Activated T-helper 2 cell treated with anti-CD3 and anti-CD28 coated beads, Interferon-gamma antibody, Interleukin-2, Interleukin-4, amounts not matched to agents 10 μg/mL and 5 μg/mL and 100 μg/mL, durations not matched to agents 14 hours and 24 hours and 36 hours (primary cell): ENCODE measurements at regions of chr5 and their contacts with region 1.

Region 1: GRCh38 chr5:32312647-32313523 is at the start of gene MTMR12:
- DNase-seq: peak; percentile 100
- H3K4me3 Mint-ChIP-seq: peak within 1 kb of the TSS; percentile 87
- H3K27ac Mint-ChIP-seq: peak within 1 kb of the TSS; percentile 76
- H3K4me1 Mint-ChIP-seq: peaks cover 22% of the 10 kb centered on the region
- H3K27me3 Mint-ChIP-seq: no peaks in the 10 kb centered on the region
- total RNA-seq, gene MTMR12: 22.7 and 23.5 TPM in 2 replicates

Region 2: GRCh38 chr5:32206509-32207354 is 106.2 kb before region 1 on chr5:
- intact Hi-C with region 1: loop called (anchors 5 kb)
- DNase-seq: no peak
- H3K4me3 Mint-ChIP-seq: no peak overlapping the region
- H3K27ac Mint-ChIP-seq: peak overlapping the region; percentile 38
- H3K4me1 Mint-ChIP-seq: peaks cover 23% of the 10 kb centered on the region
- H3K27me3 Mint-ChIP-seq: no peaks in the 10 kb centered on the region

Region 3: GRCh38 chr5:32232441-32233219 is 80.3 kb before region 1 on chr5:
- intact Hi-C with region 1: loop called (anchors 1 kb)
- DNase-seq: peak; percentile 63
- H3K4me3 Mint-ChIP-seq: no peak overlapping the region
- H3K27ac Mint-ChIP-seq: peak overlapping the region; percentile 82
- H3K4me1 Mint-ChIP-seq: peaks cover 25% of the 10 kb centered on the region
- H3K27me3 Mint-ChIP-seq: no peaks in the 10 kb centered on the region

Region 4: DNA sequence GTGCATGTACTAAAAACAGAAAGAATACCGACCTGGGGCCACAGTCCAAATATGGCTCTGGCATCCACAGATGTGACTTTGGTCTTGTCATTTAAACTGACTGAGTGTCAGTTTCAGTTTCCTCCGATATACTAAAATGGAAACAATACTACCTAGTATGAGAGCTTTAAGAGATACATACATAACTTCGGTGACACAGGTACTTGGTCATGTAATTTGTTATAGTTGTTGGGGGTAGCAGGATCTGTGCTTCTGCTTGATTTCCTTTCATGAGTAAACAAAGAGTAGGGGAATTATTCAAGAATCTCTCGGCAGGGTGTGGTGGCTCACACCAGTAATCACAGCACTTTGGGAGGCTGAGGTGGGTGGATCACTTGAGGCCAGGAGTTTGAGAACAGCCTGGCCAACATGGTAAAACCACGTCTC is 32.2 kb before region 1 on chr5:
- intact Hi-C with region 1: loop called (anchors 1 kb)
- DNase-seq: no peak
- H3K4me3 Mint-ChIP-seq: peak overlapping the region; percentile 7
- H3K27ac Mint-ChIP-seq: peak overlapping the region; percentile 93
- H3K4me1 Mint-ChIP-seq: peaks cover 54% of the 10 kb centered on the region
- H3K27me3 Mint-ChIP-seq: no peaks in the 10 kb centered on the region

Region 5: DNA sequence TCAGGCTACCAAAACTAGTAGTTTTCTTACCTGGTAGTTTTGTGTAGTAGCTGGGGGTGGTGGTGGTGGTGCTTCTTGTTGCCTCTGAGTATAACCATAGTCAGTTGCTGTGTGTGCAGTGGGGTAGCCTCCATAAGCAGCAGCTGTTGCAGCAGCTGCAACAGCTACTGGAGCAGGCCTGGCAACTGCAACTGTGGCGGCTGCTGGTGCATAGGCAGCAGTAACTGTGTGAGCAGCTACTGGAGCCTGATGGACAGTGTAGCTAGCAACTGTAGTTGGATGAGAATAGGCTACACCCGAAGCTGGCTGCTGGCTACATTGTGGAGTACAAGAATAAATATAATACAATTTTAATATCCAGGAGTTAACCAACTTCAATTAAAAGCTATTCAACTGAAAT is 106.9 kb after region 1 on chr5:
- intact Hi-C with region 1: no loop called
- DNase-seq: no peak
- H3K4me3 Mint-ChIP-seq: no peak overlapping the region
- H3K27ac Mint-ChIP-seq: no peak overlapping the region
- H3K4me1 Mint-ChIP-seq: peaks cover 15% of the 10 kb centered on the region
- H3K27me3 Mint-ChIP-seq: no peaks in the 10 kb centered on the region

Region 6: GRCh38 chr5:32444431-32445286 is 131.8 kb after region 1 on chr5 and contains the start of gene ZFR:
- intact Hi-C with region 1: loop called (anchors 1 kb)
- DNase-seq: peak; percentile 91
- H3K4me3 Mint-ChIP-seq: peak within 1 kb of the TSS; percentile 93
- H3K27ac Mint-ChIP-seq: peak within 1 kb of the TSS; percentile 93
- H3K4me1 Mint-ChIP-seq: peaks cover 30% of the 10 kb centered on the region
- H3K27me3 Mint-ChIP-seq: peaks cover 17% of the 10 kb centered on the region
- total RNA-seq, gene ZFR: 68.6 and 69.2 TPM in 2 replicates

Region 7: DNA sequence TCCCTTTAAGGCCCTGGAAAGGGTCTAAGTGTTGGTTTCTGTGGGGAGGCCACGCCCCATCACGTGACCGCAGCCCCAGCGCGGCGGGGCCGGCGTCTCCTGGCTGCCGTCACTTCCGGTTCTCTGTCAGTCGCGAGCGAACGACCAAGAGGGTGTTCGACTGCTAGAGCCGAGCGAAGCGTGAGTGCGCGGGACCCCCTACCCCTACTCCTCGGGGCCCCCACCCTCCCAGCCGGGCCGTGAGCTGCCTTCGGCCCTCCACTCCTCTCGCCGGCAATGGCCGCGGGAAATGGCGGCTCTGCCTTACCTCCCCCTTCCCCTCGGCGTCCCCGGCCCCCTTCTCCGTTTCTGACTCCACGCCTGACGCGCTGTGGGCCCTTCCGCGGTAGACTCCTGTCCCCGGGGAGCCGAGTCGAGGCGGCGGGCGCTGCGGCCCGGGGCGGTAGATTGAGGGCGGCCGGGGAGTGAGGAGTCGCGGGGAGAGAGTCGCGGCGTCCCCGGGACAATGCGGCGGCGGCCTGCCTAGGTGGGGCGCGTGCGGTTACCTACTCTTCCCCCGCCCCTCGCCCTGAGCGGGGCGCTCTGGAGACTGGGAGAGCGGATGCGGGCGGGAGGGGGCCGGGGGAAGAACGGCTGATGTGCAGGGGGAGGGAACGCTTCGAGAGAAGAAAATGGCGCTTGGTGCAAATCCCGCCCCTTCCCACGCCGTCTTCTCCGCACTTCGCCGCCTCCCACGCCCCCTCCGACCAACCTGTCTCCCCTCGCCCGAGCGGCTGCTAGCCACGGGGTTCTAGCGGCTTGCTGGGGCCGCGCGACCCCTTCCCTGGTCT is 272.8 kb after region 1 on chr5 and contains the start of gene SUB1:
- intact Hi-C with region 1: loop called (anchors 2 kb)
- DNase-seq: peak; percentile 90
- H3K4me3 Mint-ChIP-seq: peak within 1 kb of the TSS; percentile 96
- H3K27ac Mint-ChIP-seq: peak within 1 kb of the TSS; percentile 99
- H3K4me1 Mint-ChIP-seq: peaks cover 55% of the 10 kb centered on the region
- H3K27me3 Mint-ChIP-seq: no peaks in the 10 kb centered on the region
- total RNA-seq, gene SUB1: 380 and 404 TPM in 2 replicates